GM12878 (cell line): ENCODE measurements at regions of chr15 and their contacts with region 1.

Region 1: GRCh38 chr15:31254431-31255175 is 72.0 kb upstream of the KLF13 start:
- DNase-seq: no peak
- ATAC-seq: no peak
- H3K4me3 ChIP-seq: no peak overlapping the region
- H3K27ac ChIP-seq: peak overlapping the region; percentile 76
- H3K4me1 ChIP-seq: peaks cover 38% of the 10 kb centered on the region
- H3K27me3 ChIP-seq: no peaks in the 10 kb centered on the region
- CTCF ChIP-seq: no peak
- EP300 ChIP-seq: no peak
- POLR2A ChIP-seq: no peak
- RAD21 ChIP-seq: no peak

Region 2: GRCh38 chr15:30940359-30940758 is 314.2 kb before region 1 on chr15:
- CTCF ChIA-PET with region 1: no interaction called
- POLR2A ChIA-PET with region 1: no interaction called
- RAD21 ChIA-PET with region 1: no interaction called
- SMC1A ChIA-PET with region 1: no interaction called
- in situ Hi-C with region 1: no loop called
- intact Hi-C with region 1: no loop called
- DNase-seq: no peak
- ATAC-seq: no peak
- H3K4me3 ChIP-seq: no peak overlapping the region
- H3K27ac ChIP-seq: no peak overlapping the region
- H3K4me1 ChIP-seq: no peaks in the 10 kb centered on the region
- H3K27me3 ChIP-seq: no peaks in the 10 kb centered on the region
- CTCF ChIP-seq: no peak
- EP300 ChIP-seq: no peak
- POLR2A ChIP-seq: no peak
- RAD21 ChIP-seq: no peak

Region 3: DNA sequence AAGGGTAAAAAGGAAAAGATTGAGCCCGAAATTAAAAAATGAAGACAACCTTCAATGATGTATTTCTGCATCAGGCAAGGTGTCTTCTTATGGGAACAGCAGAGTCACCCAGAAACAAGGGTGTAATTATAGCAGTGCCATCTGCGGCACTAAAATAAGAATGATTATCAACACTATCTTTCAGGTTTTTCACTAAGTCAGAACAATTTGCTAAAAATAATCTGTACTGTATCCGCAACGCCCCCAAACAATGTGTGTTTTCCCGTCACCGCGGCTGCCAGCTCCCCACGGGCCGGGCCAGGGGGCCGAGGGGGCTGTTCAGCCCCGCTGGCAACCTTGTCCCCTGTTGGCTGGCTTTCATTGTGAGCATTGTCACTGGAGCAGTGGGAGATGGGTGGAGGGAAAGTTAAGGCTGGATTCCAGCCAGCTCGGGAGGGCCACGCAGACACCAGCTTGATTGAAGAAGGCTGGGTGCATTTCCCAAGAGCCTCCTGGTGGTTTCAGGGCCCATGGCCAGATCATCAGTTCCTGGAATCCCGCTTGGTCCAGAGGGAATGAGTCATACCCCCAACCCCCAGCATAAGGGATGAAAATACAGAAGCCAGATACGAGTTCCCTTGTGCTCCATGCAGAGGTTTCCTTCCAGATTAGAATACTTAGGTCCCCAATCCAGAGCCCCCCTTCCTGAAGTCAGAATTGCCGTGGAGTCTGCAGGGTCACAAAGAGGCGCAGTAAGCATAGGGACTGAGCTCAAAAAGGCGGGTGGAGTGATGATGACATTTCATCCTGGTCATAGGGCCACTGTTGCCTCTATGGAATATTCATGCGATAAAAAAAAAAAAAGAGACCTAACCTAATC is 18.2 kb before region 1 on chr15:
- CTCF ChIA-PET with region 1: interaction called, 22 read pairs
- POLR2A ChIA-PET with region 1: interaction called, 54 read pairs
- RAD21 ChIA-PET with region 1: interaction called, 75 read pairs
- SMC1A ChIA-PET with region 1: interaction called, 134 read pairs
- in situ Hi-C with region 1: no loop called
- intact Hi-C with region 1: loop called (anchors 2 kb)
- DNase-seq: no peak
- ATAC-seq: peak; percentile 82
- H3K4me3 ChIP-seq: no peak overlapping the region
- H3K27ac ChIP-seq: peak overlapping the region; percentile 92
- H3K4me1 ChIP-seq: peaks cover 44% of the 10 kb centered on the region
- H3K27me3 ChIP-seq: no peaks in the 10 kb centered on the region
- CTCF ChIP-seq: no peak
- EP300 ChIP-seq: peak; percentile 80 to 92
- POLR2A ChIP-seq: no peak
- RAD21 ChIP-seq: no peak

Region 4: GRCh38 chr15:31241888-31242522 is 12.6 kb before region 1 on chr15:
- CTCF ChIA-PET with region 1: interaction called, 13 read pairs
- POLR2A ChIA-PET with region 1: interaction called, 54 read pairs
- RAD21 ChIA-PET with region 1: interaction called, 45 read pairs
- SMC1A ChIA-PET with region 1: interaction called, 134 read pairs
- in situ Hi-C with region 1: no loop called
- intact Hi-C with region 1: loop called (anchors 2 kb)
- DNase-seq: no peak
- ATAC-seq: no peak
- H3K4me3 ChIP-seq: no peak overlapping the region
- H3K27ac ChIP-seq: no peak overlapping the region
- H3K4me1 ChIP-seq: peaks cover 22% of the 10 kb centered on the region
- H3K27me3 ChIP-seq: no peaks in the 10 kb centered on the region
- CTCF ChIP-seq: no peak
- EP300 ChIP-seq: no peak
- POLR2A ChIP-seq: no peak
- RAD21 ChIP-seq: no peak